Activated CD8-positive, alpha-beta memory T cell treated with anti-CD3 and anti-CD28 coated beads, Interleukin-2, amount 10 ng/mL, durations not matched to agents 7 days and 5 days (primary cell): ENCODE measurements at regions of chr2 and their contacts with region 1.

Region 1: DNA sequence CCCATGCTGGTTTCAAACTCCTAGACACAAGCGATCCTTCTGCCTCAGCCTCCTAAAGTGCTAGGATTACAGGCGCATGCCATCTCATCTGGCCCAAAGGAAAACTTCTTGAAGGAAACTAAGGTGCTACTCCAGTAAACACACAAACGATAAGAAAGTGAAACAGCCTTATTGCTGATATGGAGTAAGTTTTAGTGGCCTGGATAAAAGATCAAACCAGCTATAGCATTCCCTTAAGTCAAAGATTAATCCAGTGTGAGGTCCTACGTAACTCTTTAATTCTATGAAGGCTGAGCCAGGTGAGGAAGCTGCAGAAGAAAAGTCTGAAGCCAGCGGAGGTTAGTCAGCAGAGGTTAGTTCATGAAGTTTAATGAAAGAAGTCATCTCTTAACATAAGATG is 40.8 kb upstream of the POTEE start:
- DNase-seq: no peak
- ATAC-seq: no peak
- H3K4me3 Mint-ChIP-seq: no peak overlapping the region
- H3K27ac Mint-ChIP-seq: no peak overlapping the region
- H3K4me1 Mint-ChIP-seq: no peaks in the 10 kb centered on the region
- H3K27me3 Mint-ChIP-seq: peaks cover 4% of the 10 kb centered on the region

Region 2: GRCh38 chr2:131093006-131093695 is 75.4 kb before region 1 on chr2 and contains the start of gene FAM168B:
- CTCF ChIA-PET with region 1: no interaction called
- DNase-seq: peak; percentile 90
- ATAC-seq: peak; percentile 77
- H3K4me3 Mint-ChIP-seq: peak within 1 kb of the TSS; percentile 91
- H3K27ac Mint-ChIP-seq: peak within 1 kb of the TSS; percentile 98
- H3K4me1 Mint-ChIP-seq: peaks cover 30% of the 10 kb centered on the region
- H3K27me3 Mint-ChIP-seq: peaks cover 3% of the 10 kb centered on the region
- total RNA-seq, gene FAM168B: 40.6 to 65.5 TPM

Region 3: GRCh38 chr2:131154071-131154531 is 14.4 kb before region 1 on chr2:
- CTCF ChIA-PET with region 1: interaction called, 10 read pairs
- DNase-seq: peak; percentile 87
- ATAC-seq: peak; percentile 92
- H3K4me3 Mint-ChIP-seq: no peak overlapping the region
- H3K27ac Mint-ChIP-seq: peak overlapping the region; percentile 2
- H3K4me1 Mint-ChIP-seq: peaks cover 29% of the 10 kb centered on the region
- H3K27me3 Mint-ChIP-seq: no peaks in the 10 kb centered on the region